ENCODE measurements at regions of chr22 and their contacts with region 1.

Region 1: GRCh38 chr22:37260901-37261336 is 16.9 kb upstream of the RAC2 start:
- DNase-seq: peak; percentile 55
- H3K4me3 ChIP-seq: no peak overlapping the region
- H3K27ac ChIP-seq: no peak overlapping the region
- H3K4me1 ChIP-seq: peaks cover 9% of the 10 kb centered on the region
- H3K27me3 ChIP-seq: no peaks in the 10 kb centered on the region
- CTCF ChIP-seq: peak; percentile 91 to 92
- POLR2A ChIP-seq: no peak

Region 2: GRCh38 chr22:37229805-37230672 is 30.9 kb before region 1 on chr22:
- CTCF ChIA-PET with region 1: interaction called, 64 read pairs
- POLR2A ChIA-PET with region 1: no interaction called
- dilution Hi-C with region 1: no loop called
- intact Hi-C with region 1: loop called (anchors 1 kb)
- DNase-seq: no peak
- H3K4me3 ChIP-seq: no peak overlapping the region
- H3K27ac ChIP-seq: peak overlapping the region; percentile 57
- H3K4me1 ChIP-seq: peaks cover 27% of the 10 kb centered on the region
- H3K27me3 ChIP-seq: no peaks in the 10 kb centered on the region
- CTCF ChIP-seq: no peak
- POLR2A ChIP-seq: no peak

Region 3: GRCh38 chr22:37244114-37244921 is 16.6 kb before region 1 on chr22 and contains the start of gene RAC2:
- CTCF ChIA-PET with region 1: interaction called, 83 read pairs
- POLR2A ChIA-PET with region 1: no interaction called
- dilution Hi-C with region 1: no loop called
- intact Hi-C with region 1: no loop called
- DNase-seq: peak; percentile 69
- H3K4me3 ChIP-seq: peak within 1 kb of the TSS; percentile 39 to 59 (median 50)
- H3K27ac ChIP-seq: peak within 1 kb of the TSS; percentile 28
- H3K4me1 ChIP-seq: peaks cover 34% of the 10 kb centered on the region
- H3K27me3 ChIP-seq: no peaks in the 10 kb centered on the region
- CTCF ChIP-seq: no peak
- POLR2A ChIP-seq: peak; percentile 84
- total RNA-seq, gene RAC2: 111 and 122 TPM in 2 replicates

Region 4: GRCh38 chr22:37295213-37295886 is 34.4 kb after region 1 on chr22:
- CTCF ChIA-PET with region 1: interaction called, 12 read pairs
- POLR2A ChIA-PET with region 1: no interaction called
- dilution Hi-C with region 1: no loop called
- intact Hi-C with region 1: no loop called
- DNase-seq: no peak
- H3K4me3 ChIP-seq: no peak overlapping the region
- H3K27ac ChIP-seq: no peak overlapping the region
- H3K4me1 ChIP-seq: no peaks in the 10 kb centered on the region
- H3K27me3 ChIP-seq: no peaks in the 10 kb centered on the region
- CTCF ChIP-seq: no peak
- POLR2A ChIP-seq: no peak

Measured in endothelial cell of umbilical vein (primary cell).